Endothelial cell of umbilical vein (primary cell): ENCODE measurements at regions of chr11 and their contacts with region 1.

Region 1: DNA sequence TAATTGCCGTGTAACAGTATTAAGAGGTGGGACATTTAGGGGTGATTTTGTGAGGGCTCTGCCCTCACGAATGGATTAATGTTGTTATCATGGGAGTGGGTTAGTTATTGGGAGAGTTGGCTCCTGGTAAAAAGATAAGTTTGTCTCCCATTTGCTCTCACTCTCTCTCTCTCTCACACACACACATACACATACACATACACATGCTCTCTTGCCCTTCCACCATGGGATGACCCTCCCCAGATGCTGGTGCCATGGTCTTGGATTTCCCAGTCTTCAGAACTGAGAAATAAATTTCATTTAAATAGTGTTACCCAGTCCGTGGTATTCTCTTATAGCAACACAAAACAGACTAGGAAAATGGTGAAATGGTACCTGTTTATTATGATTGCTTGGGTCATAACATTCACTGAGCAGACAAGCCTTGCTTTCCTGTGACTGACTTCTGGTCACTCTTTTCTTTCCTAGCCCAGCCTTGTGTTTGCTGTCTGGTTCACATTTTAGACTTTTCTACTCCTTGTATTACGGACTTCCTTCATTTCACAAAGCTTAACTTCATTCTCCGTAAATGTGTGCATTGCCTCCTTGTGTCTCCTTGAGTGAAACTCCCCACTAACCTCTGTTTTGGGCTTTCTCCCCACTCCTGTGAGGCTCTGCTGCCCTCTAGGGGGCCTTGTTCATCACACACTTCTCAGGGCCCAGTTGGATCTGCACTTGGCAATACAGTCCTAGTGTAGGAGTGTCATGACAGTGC is 206.5 kb upstream of the CTSC start:
- DNase-seq: peak; percentile 95
- H3K4me3 ChIP-seq: no peak overlapping the region
- H3K27ac ChIP-seq: no peak overlapping the region
- H3K4me1 ChIP-seq: peaks cover 3% of the 10 kb centered on the region
- H3K27me3 ChIP-seq: no peaks in the 10 kb centered on the region
- CTCF ChIP-seq: peak; percentile 85 to 98
- POLR2A ChIP-seq: no peak

Region 2: DNA sequence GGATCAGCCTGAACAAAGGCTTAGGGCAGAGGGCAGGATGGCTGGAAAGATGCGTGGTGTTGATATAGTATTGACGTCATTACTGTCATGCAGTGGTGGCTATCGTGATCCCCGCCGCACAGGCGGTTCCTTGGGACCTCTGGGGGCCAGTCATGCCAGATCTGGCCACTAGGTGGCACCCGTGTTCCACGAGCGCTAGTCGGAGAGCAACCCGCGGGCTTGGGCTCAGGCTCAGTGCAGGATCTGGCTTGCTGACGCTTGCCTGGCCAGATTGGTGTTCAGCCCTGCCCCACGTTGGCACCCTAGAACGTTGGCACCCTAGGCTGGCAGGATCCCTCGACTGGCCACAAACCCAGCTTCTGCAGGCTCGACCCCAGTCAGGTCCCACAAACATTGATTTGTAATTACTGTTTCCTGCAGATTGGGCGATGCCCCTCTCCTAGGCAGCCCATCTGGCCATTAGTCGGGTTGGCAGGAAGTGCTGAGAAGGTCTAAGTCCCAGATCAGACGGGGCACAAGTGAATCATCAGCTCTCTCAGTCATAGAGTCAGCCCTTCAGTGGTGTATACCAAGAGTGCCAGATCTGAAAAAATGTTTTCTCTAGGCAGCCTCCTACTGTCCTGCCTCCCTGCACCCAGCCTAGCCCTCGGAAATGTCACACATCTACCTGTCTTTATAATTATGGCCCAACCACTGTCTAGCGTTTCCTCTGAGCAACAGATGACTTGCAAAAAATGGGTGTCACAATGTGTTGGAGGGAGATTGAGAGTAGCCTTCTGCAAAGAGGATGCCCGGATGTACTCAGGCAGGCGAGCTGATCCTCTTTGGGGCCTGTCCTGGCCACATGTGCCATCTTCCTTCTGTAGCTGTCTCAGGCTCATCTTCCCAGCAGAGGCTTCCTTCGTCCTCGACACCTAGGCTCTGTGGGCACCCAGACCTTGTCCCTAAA is 1191.0 kb before region 1 on chr11:
- CTCF ChIA-PET with region 1: interaction called, 3 read pairs
- POLR2A ChIA-PET with region 1: no interaction called
- dilution Hi-C with region 1: no loop called
- intact Hi-C with region 1: loop called (anchors 1 kb)
- DNase-seq: peak; percentile 89
- H3K4me3 ChIP-seq: no peak overlapping the region
- H3K27ac ChIP-seq: peak overlapping the region; percentile 62
- H3K4me1 ChIP-seq: peaks cover 18% of the 10 kb centered on the region
- H3K27me3 ChIP-seq: no peaks in the 10 kb centered on the region
- CTCF ChIP-seq: peak; percentile 96 to 97
- POLR2A ChIP-seq: no peak

Region 3: GRCh38 chr11:87878373-87878779 is 665.7 kb before region 1 on chr11:
- CTCF ChIA-PET with region 1: interaction called, 33 read pairs
- POLR2A ChIA-PET with region 1: no interaction called
- dilution Hi-C with region 1: no loop called
- intact Hi-C with region 1: loop called (anchors 1 kb)
- DNase-seq: peak; percentile 43
- H3K4me3 ChIP-seq: no peak overlapping the region
- H3K27ac ChIP-seq: no peak overlapping the region
- H3K4me1 ChIP-seq: no peaks in the 10 kb centered on the region
- H3K27me3 ChIP-seq: no peaks in the 10 kb centered on the region
- CTCF ChIP-seq: peak; percentile 18 to 39
- POLR2A ChIP-seq: no peak

Region 4: GRCh38 chr11:88139865-88140264 is 404.2 kb before region 1 on chr11:
- CTCF ChIA-PET with region 1: no interaction called
- POLR2A ChIA-PET with region 1: no interaction called
- dilution Hi-C with region 1: no loop called
- intact Hi-C with region 1: no loop called
- DNase-seq: no peak
- H3K4me3 ChIP-seq: no peak overlapping the region
- H3K27ac ChIP-seq: no peak overlapping the region
- H3K4me1 ChIP-seq: no peaks in the 10 kb centered on the region
- H3K27me3 ChIP-seq: no peaks in the 10 kb centered on the region
- CTCF ChIP-seq: no peak
- POLR2A ChIP-seq: no peak

Region 5: DNA sequence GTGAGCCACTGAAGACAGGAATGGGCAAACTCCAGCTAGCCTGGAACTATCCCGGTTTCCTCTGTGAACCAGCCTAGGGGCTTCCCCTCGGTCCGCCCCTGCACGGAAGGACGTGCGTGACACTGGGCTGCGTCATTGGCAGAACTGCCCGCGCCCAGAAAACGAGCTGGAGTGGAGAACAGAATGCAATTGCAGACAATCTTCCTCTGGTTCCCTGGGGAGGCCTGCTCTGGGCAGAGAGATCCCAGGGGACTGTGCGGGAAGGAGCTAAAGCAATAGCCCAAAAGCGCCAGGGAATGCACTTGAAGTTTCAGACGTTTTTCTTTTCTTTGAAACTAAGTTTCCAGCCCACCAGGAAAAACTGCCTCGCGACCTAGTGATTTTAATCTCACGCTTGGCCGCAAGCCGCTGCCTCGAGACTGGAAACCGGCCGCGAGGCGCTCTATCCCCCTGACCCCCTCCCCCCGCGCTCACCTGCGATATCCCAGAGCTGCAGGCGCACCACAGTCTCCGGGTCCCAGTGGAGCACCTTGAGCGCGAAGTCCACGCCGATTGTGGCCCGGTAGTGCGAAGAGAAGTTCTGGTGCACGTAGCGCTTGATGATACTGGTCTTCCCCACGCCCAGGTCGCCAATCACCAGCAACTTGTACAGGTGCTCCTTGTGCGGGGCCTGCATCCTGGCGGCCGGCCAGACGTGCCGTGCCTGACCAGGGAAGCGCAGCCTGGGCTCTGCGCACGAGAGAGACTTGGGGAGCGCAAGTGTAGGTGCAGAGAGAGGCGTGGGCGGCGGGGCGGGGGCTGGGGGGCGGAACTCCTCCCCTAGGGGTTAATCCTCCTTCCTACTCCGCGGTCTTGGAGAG is 369.1 kb before region 1 on chr11 and contains the start of gene RAB38:
- CTCF ChIA-PET with region 1: interaction called, 7 read pairs
- POLR2A ChIA-PET with region 1: no interaction called
- dilution Hi-C with region 1: no loop called
- intact Hi-C with region 1: loop called (anchors 2 kb)
- DNase-seq: peak; percentile 80
- H3K4me3 ChIP-seq: peak within 1 kb of the TSS; percentile 43 to 61 (median 61)
- H3K27ac ChIP-seq: peak within 1 kb of the TSS; percentile 28
- H3K4me1 ChIP-seq: peaks cover 6% of the 10 kb centered on the region
- H3K27me3 ChIP-seq: peaks cover 4 to 5% of the 10 kb centered on the region in 2 experiments
- CTCF ChIP-seq: no peak
- POLR2A ChIP-seq: no peak
- total RNA-seq, gene RAB38: 2.1 and 3.6 TPM in 2 replicates

Region 6: GRCh38 chr11:88327061-88327460 is 217.0 kb before region 1 on chr11:
- CTCF ChIA-PET with region 1: interaction called, 17 read pairs
- POLR2A ChIA-PET with region 1: no interaction called
- dilution Hi-C with region 1: no loop called
- intact Hi-C with region 1: no loop called
- DNase-seq: no peak
- H3K4me3 ChIP-seq: no peak overlapping the region
- H3K27ac ChIP-seq: no peak overlapping the region
- H3K4me1 ChIP-seq: peaks cover 17% of the 10 kb centered on the region
- H3K27me3 ChIP-seq: no peaks in the 10 kb centered on the region
- CTCF ChIP-seq: no peak
- POLR2A ChIP-seq: no peak

Region 7: DNA sequence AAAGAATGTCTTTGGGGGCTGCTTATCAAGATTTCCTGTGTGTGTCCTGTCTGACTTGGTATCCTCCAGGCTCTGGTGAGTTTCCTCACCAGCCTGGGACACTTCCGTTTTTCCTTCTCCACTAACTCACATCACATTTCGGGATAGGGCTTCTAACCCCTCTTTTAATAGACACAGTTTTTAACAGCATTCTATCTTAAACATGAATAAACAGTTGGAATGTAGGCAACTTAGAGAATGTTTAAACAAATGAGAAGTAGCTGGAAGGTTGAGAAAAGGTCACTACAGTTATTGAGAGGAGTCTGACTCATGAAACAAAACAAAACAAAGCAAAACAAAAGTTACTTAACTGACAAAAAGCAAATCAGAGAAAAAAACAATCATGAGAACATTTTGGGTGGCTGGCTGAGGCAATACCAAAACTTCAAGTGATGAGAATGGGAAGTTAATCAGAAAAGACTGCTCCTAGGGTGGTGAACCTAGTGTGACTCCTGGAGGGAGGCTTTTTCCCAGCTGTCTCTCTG is 141.8 kb before region 1 on chr11:
- CTCF ChIA-PET with region 1: interaction called, 4 read pairs
- POLR2A ChIA-PET with region 1: no interaction called
- dilution Hi-C with region 1: no loop called
- intact Hi-C with region 1: loop called (anchors 2 kb)
- DNase-seq: peak; percentile 93
- H3K4me3 ChIP-seq: peak overlapping the region in 1 of 3 experiments; percentile 43
- H3K27ac ChIP-seq: peak overlapping the region; percentile 95
- H3K4me1 ChIP-seq: peaks cover 50% of the 10 kb centered on the region
- H3K27me3 ChIP-seq: no peaks in the 10 kb centered on the region
- CTCF ChIP-seq: no peak
- POLR2A ChIP-seq: no peak

Region 8: DNA sequence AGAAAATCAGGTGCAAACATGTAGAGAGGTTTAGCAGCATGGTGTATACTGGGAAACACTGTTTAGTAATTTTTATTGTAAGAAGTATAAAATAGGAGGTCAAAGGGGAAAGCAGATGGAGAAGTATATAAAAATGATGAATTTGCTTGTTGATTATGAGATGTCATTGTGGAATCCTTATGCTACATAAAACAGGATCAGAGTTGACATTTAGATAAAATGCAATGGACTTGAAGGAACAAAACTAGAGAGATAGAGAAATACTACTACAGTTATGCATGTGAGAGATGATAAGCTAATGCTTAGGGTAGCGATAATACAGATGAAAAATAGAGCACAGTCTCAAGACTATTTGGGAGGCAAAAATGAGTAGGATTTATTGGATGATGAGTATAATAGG is 14.7 kb before region 1 on chr11:
- CTCF ChIA-PET with region 1: interaction called, 13 read pairs
- POLR2A ChIA-PET with region 1: no interaction called
- dilution Hi-C with region 1: no loop called
- intact Hi-C with region 1: no loop called
- DNase-seq: no peak
- H3K4me3 ChIP-seq: no peak overlapping the region
- H3K27ac ChIP-seq: no peak overlapping the region
- H3K4me1 ChIP-seq: no peaks in the 10 kb centered on the region
- H3K27me3 ChIP-seq: no peaks in the 10 kb centered on the region
- CTCF ChIP-seq: no peak
- POLR2A ChIP-seq: no peak

Region 9: DNA sequence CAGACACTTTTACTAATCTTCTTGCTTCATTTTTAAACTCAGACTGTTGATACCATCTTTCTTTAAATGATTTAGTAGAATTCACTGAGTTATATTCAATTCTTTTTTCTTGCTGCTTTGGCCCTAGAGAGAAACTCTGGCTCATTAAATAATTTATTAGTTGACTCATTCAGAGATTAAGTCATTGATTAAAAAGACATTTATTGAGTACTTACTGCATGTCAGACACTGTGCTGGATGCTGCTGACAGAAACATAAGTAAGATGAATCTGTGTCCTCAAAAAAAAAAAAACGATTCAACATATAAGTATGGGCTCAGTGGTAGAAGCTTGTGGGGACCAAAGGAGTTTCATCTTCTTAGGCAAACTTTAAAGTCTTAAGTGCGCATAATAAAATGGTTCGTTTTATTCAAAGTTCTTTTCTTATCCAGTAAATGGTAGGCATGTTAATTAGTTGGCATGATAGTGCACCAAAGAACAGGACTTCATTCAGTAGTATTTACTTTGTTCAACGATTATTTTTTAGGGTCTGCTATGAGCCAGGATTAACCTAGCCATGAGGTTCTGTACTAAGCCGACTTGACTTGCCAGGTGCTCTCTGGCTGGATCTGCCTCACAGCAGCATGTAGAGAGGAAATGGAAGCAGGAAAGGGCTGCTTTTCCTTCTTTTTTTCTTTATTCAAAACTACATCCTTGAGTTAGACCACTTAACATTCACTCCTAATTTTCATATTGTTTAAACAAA is 74.4 kb after region 1 on chr11:
- CTCF ChIA-PET with region 1: no interaction called
- POLR2A ChIA-PET with region 1: no interaction called
- dilution Hi-C with region 1: no loop called
- intact Hi-C with region 1: no loop called
- DNase-seq: peak; percentile 37
- H3K4me3 ChIP-seq: no peak overlapping the region
- H3K27ac ChIP-seq: no peak overlapping the region
- H3K4me1 ChIP-seq: no peaks in the 10 kb centered on the region
- H3K27me3 ChIP-seq: no peaks in the 10 kb centered on the region
- CTCF ChIP-seq: no peak
- POLR2A ChIP-seq: no peak